Gastrocnemius medialis (tissue), 4 donors: ENCODE measurements at regions of chr2 and their contacts with region 1.

Region 1: GRCh38 chr2:118309946-118310680 is 221.8 kb downstream of the INSIG2 start:
- DNase-seq: peak in 1 of 2 donors; percentile 30
- ATAC-seq: peak; percentile 44 to 65
- H3K4me3 ChIP-seq: peak overlapping the region; percentile 68 to 78 (median 74)
- H3K27ac ChIP-seq: peak overlapping the region; percentile 84 to 90 (median 86)
- H3K4me1 ChIP-seq: peaks cover 19 to 24% of the 10 kb centered on the region in 2 donors
- H3K27me3 ChIP-seq: no peaks in the 10 kb centered on the region
- CTCF ChIP-seq: no peak
- POLR2A ChIP-seq: peak; percentile 28 to 44

Region 2: GRCh38 chr2:118227700-118228508 is 82.2 kb before region 1 on chr2:
- in situ Hi-C with region 1: no loop called
- intact Hi-C with region 1: loop called (anchors 2 kb)
- DNase-seq: peak in 1 of 2 donors; percentile 28
- ATAC-seq: peak; percentile 19 to 79
- H3K4me3 ChIP-seq: peak overlapping the region in 1 of 4 donors; percentile 14
- H3K27ac ChIP-seq: peak overlapping the region; percentile 88 to 92 (median 90)
- H3K4me1 ChIP-seq: peaks cover 25 to 29% of the 10 kb centered on the region in 2 donors
- H3K27me3 ChIP-seq: peaks cover 0 to 5% (median 0%) of the 10 kb centered on the region in 3 donors
- CTCF ChIP-seq: no peak
- POLR2A ChIP-seq: no peak

Region 3: GRCh38 chr2:118774458-118775133 is 464.5 kb after region 1 on chr2:
- in situ Hi-C with region 1: no loop called
- intact Hi-C with region 1: loop called (anchors 1 kb)
- DNase-seq: peak; percentile 27 to 65
- ATAC-seq: peak; percentile 85 to 93
- H3K4me3 ChIP-seq: peak overlapping the region; percentile 53 to 66 (median 60)
- H3K27ac ChIP-seq: peak overlapping the region; percentile 78 to 85 (median 79)
- H3K4me1 ChIP-seq: peaks cover 0 to 12% of the 10 kb centered on the region in 2 donors
- H3K27me3 ChIP-seq: no peaks in the 10 kb centered on the region
- CTCF ChIP-seq: no peak
- POLR2A ChIP-seq: peak; percentile 47 to 49

Region 4: GRCh38 chr2:118847497-118848172 is 537.5 kb after region 1 on chr2 and contains the start of gene EN1:
- in situ Hi-C with region 1: loop called in 1 of 4 experiments (anchors 10 kb)
- intact Hi-C with region 1: loop called (anchors 2 kb)
- DNase-seq: peak; percentile 88 to 94
- ATAC-seq: peak; percentile 46 to 52
- H3K4me3 ChIP-seq: peak within 1 kb of the TSS; percentile 56 to 93 (median 80)
- H3K27ac ChIP-seq: peak within 1 kb of the TSS; percentile 92 to 97 (median 96)
- H3K4me1 ChIP-seq: peaks cover 5 to 9% of the 10 kb centered on the region in 2 donors
- H3K27me3 ChIP-seq: no peaks in the 10 kb centered on the region
- CTCF ChIP-seq: no peak
- POLR2A ChIP-seq: peak; percentile 83 to 86
- total RNA-seq, gene EN1: 3.9 to 11.0 (median 6.7) TPM

Region 5: DNA sequence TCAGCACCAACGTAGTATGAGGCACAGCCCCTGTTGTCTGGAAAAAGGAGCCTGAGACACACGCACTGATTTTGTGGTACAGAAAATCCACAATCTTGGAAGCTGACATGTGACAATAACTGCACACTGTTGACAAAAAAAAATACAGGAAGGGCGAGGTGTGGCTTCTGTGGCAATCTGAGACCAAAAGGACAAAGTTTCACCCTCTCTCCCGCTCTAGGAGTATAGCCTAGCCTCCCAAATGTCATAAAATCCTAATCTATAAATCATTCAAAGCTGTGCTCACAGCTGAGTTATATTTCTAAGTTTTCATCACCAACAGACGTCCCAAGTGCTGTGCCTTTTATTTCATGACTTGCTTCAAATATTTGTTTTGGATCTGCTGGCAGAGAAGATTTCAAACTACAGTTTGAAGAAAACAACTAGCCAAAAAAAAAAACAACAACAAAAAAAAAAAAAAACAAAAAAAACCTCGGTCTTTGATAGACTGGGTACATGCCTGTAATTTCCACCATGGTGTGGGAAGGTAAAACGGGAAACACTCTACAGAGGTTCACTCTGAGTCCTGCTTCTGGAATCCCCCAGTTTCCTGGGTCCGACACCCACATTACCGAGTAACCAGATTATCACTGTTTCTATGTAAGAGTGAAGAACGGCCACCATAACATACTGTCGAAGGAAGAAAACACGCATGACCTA is 995.5 kb after region 1 on chr2:
- in situ Hi-C with region 1: no loop called
- intact Hi-C with region 1: loop called (anchors 5 kb)
- DNase-seq: no peak
- ATAC-seq: peak; percentile 60 to 77
- H3K4me3 ChIP-seq: peak overlapping the region; percentile 24 to 49 (median 42)
- H3K27ac ChIP-seq: peak overlapping the region; percentile 82 to 90 (median 85)
- H3K4me1 ChIP-seq: peaks cover 8 to 19% of the 10 kb centered on the region in 2 donors
- H3K27me3 ChIP-seq: no peaks in the 10 kb centered on the region
- CTCF ChIP-seq: no peak
- POLR2A ChIP-seq: no peak